B cell (primary cell): ENCODE measurements at regions of chr21 and their contacts with region 1.

Region 1: GRCh38 chr21:31781737-31782136 is 49.8 kb upstream of the SCAF4 start:
- DNase-seq: no peak
- ATAC-seq: no peak
- H3K4me3 ChIP-seq: no peak overlapping the region
- H3K4me3 Mint-ChIP-seq: no peak overlapping the region
- H3K27ac ChIP-seq: no peak overlapping the region
- H3K27ac Mint-ChIP-seq: no peak overlapping the region
- H3K4me1 ChIP-seq: peaks cover 6 to 11% of the 10 kb centered on the region in 2 donors
- H3K4me1 Mint-ChIP-seq: peaks cover 15% of the 10 kb centered on the region
- H3K27me3 ChIP-seq: no peaks in the 10 kb centered on the region
- H3K27me3 Mint-ChIP-seq: no peaks in the 10 kb centered on the region
- CTCF ChIP-seq: no peak

Region 2: DNA sequence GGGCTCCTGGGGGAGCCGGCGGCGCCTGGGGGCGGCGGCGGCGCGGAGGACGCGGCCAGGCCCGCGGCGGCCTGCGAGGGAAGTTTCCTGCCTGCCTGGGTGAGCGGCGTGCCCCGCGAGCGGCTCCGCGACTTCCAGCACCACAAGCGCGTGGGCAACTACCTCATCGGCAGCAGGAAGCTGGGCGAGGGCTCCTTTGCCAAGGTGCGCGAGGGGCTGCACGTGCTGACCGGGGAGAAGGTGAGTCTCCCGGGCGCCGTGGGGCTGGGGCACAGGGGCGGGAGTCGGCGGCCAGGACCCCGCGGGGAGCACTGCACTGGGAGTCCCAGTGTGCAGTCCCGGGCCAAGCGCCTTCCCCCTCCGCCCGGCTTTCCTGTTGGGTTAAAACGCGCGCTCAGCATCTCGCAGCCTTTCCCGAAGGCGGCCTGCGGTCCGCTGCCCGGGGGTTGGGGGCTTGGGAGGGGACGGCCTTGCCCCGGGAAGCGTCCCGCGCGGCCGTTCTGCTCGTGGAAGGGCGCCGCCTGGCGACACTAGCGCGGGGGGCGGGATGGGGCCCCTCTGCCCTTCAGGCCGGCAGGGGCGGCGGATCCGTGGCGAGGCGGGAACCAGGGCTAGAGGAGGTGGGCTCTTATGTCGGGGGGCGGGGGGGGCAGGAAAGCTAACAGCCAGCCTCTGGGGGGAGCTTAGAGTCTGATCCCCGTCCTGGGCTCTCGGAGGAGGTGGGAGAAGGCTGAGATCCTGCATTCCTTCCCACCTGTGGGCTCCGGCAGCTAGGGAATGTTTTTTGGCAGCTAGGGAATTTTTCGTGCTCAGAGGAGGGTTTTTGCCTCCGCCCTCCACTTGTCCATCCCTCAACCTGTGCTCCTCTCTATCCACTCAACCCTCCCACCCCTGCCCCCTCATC is 92.2 kb after region 1 on chr21:
- CTCF ChIA-PET with region 1: interaction called, 9 read pairs
- POLR2A ChIA-PET with region 1: no interaction called
- intact Hi-C with region 1: loop called (anchors 2 kb)
- DNase-seq: peak; percentile 58
- ATAC-seq: peak; percentile 57
- H3K4me3 ChIP-seq: peak overlapping the region in 4 of 5 experiments; percentile 32 to 65 (median 50)
- H3K4me3 Mint-ChIP-seq: peak overlapping the region; percentile 57
- H3K27ac ChIP-seq: no peak overlapping the region
- H3K27ac Mint-ChIP-seq: no peak overlapping the region
- H3K4me1 ChIP-seq: peaks cover 14 to 22% of the 10 kb centered on the region in 2 donors
- H3K4me1 Mint-ChIP-seq: peaks cover 10% of the 10 kb centered on the region
- H3K27me3 ChIP-seq: peaks cover 0 to 69% (median 24%) of the 10 kb centered on the region in 4 experiments
- H3K27me3 Mint-ChIP-seq: peaks cover 55% of the 10 kb centered on the region
- CTCF ChIP-seq: peak; percentile 64

Region 3: GRCh38 chr21:31895077-31895835 is 113.5 kb after region 1 on chr21:
- CTCF ChIA-PET with region 1: no interaction called
- POLR2A ChIA-PET with region 1: no interaction called
- intact Hi-C with region 1: no loop called
- DNase-seq: no peak
- ATAC-seq: no peak
- H3K4me3 ChIP-seq: no peak overlapping the region
- H3K4me3 Mint-ChIP-seq: no peak overlapping the region
- H3K27ac ChIP-seq: no peak overlapping the region
- H3K27ac Mint-ChIP-seq: no peak overlapping the region
- H3K4me1 ChIP-seq: no peaks in the 10 kb centered on the region
- H3K4me1 Mint-ChIP-seq: no peaks in the 10 kb centered on the region
- H3K27me3 ChIP-seq: peaks cover 0 to 2% (median 0%) of the 10 kb centered on the region in 4 experiments
- H3K27me3 Mint-ChIP-seq: peaks cover 23% of the 10 kb centered on the region
- CTCF ChIP-seq: no peak

Region 4: DNA sequence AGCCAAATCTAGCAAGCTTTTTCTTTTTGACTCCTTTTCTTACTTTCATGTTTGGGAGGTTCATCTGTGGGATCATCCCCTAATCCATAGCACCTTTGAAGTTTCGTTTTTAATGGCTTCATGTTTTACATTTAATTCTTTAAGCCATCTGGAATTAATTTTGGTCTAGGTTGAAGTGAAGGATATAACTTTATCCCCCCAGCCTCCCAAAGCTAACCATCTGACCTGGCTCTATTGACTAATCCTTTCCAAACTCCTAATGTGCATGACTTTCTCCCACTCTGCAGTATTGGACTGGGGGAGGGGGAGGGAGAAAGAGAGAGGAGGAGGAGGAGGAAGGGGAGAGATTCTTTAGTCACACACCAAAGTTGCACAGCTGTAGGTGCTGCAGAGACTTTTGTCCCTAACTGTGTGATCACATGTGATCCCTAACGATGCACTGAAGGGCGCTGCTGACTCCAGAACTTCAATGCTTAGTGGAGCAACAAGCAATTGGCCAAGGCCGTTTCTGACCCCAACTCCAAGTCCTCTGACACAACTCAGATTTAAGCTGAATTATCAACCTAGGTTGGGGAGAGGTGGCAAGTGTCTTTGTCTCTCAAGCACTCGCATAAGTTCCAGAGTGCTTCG is 282.7 kb after region 1 on chr21:
- CTCF ChIA-PET with region 1: no interaction called
- POLR2A ChIA-PET with region 1: no interaction called
- intact Hi-C with region 1: no loop called
- DNase-seq: no peak
- ATAC-seq: no peak
- H3K4me3 ChIP-seq: no peak overlapping the region
- H3K4me3 Mint-ChIP-seq: no peak overlapping the region
- H3K27ac ChIP-seq: no peak overlapping the region
- H3K27ac Mint-ChIP-seq: no peak overlapping the region
- H3K4me1 ChIP-seq: no peaks in the 10 kb centered on the region
- H3K4me1 Mint-ChIP-seq: no peaks in the 10 kb centered on the region
- H3K27me3 ChIP-seq: no peaks in the 10 kb centered on the region
- H3K27me3 Mint-ChIP-seq: peaks cover 6% of the 10 kb centered on the region
- CTCF ChIP-seq: no peak

Region 5: GRCh38 chr21:32270748-32271147 is 489.0 kb after region 1 on chr21:
- CTCF ChIA-PET with region 1: no interaction called
- POLR2A ChIA-PET with region 1: no interaction called
- intact Hi-C with region 1: loop called (anchors 5 kb)
- DNase-seq: no peak
- ATAC-seq: no peak
- H3K4me3 ChIP-seq: no peak overlapping the region
- H3K4me3 Mint-ChIP-seq: no peak overlapping the region
- H3K27ac ChIP-seq: no peak overlapping the region
- H3K27ac Mint-ChIP-seq: no peak overlapping the region
- H3K4me1 ChIP-seq: no peaks in the 10 kb centered on the region
- H3K4me1 Mint-ChIP-seq: no peaks in the 10 kb centered on the region
- H3K27me3 ChIP-seq: no peaks in the 10 kb centered on the region
- H3K27me3 Mint-ChIP-seq: no peaks in the 10 kb centered on the region
- CTCF ChIP-seq: no peak